Ascending aorta (tissue), 2 donors: ENCODE measurements at regions of chr4 and their contacts with region 1.

Region 1: DNA sequence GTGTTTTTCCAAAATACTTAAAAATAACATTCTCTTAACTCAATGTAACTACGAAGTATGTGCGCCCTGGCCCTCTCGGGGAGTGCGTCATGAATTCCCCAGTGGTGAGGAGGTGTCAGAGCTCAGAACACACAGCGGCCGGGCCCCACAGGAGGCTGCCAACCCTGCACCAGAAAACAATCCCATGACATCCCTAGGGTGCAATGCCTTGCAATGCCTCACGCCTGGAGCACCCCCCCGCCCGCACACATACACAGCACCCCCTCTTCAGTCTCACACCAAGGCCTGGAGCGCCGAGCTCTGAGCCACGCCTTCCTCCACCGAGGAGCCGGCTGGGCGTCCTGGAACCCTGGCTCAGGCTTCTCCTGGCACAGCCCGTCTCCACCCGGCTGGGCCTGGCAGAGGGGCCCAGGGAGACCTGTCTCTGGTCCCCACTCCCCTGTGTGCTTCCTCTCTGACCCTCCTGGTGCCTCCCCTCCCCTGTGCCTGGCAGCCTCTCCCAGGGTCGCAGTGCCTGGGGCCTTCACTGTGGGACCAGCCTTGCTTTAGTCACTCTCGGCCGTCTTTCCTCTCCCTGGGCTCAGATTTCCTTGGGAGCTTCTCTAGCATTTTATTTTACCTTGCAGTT is 108.2 kb upstream of the ADRA2C start:
- DNase-seq: peak; percentile 75 to 96
- H3K4me3 ChIP-seq: peak overlapping the region in 1 of 2 donors; percentile 44
- H3K27ac ChIP-seq: peak overlapping the region; percentile 92 to 97
- H3K4me1 ChIP-seq: peaks cover 6 to 22% of the 10 kb centered on the region in 2 donors
- H3K27me3 ChIP-seq: no peaks in the 10 kb centered on the region
- CTCF ChIP-seq: no peak

Region 2: DNA sequence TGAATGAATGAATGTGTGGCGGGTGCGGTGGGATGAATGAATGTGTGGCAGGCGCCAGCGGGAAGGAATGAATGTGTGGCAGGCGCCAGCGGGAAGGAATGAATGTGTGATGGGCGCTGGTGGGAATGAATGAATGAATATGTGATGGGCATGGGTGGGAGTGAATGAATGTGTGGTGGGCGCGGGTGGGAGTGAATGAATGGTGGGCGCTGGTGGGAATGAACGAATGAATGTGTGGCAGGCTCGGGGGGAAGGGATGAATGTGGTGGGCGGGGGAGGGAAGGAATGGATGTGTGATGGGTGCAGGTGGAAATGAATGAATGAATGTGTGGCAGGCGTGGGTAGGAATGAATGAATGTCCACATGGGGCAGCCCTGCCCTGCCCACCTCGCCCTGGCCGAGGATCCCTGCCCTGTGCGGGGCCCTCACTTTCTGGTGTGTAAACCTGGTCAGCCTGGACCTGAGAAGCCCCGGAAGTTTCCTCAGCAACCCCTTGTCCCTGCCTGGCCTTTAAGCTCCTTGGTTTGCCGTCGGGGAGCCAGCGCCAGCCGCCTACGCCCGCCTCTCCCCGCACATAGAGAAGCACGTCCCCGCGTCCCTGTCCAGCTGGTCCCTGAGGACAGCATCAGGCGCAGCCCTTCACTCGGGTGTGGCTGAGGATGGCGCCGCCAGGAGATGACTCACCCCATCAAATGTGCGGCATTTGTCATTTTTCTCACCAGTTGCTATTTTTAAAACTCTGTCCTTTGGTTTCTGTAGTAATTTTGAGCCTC is 13.0 kb before region 1 on chr4:
- intact Hi-C with region 1: loop called (anchors 1 kb)
- DNase-seq: peak in 1 of 2 donors; percentile 74
- H3K4me3 ChIP-seq: no peak overlapping the region
- H3K27ac ChIP-seq: no peak overlapping the region
- H3K4me1 ChIP-seq: peaks cover 0 to 10% of the 10 kb centered on the region in 2 donors
- H3K27me3 ChIP-seq: no peaks in the 10 kb centered on the region
- CTCF ChIP-seq: no peak

Region 3: GRCh38 chr4:3677748-3678070 is 19.7 kb after region 1 on chr4:
- intact Hi-C with region 1: no loop called
- DNase-seq: no peak
- H3K4me3 ChIP-seq: no peak overlapping the region
- H3K27ac ChIP-seq: no peak overlapping the region
- H3K4me1 ChIP-seq: no peaks in the 10 kb centered on the region
- H3K27me3 ChIP-seq: no peaks in the 10 kb centered on the region
- CTCF ChIP-seq: no peak

Region 4: DNA sequence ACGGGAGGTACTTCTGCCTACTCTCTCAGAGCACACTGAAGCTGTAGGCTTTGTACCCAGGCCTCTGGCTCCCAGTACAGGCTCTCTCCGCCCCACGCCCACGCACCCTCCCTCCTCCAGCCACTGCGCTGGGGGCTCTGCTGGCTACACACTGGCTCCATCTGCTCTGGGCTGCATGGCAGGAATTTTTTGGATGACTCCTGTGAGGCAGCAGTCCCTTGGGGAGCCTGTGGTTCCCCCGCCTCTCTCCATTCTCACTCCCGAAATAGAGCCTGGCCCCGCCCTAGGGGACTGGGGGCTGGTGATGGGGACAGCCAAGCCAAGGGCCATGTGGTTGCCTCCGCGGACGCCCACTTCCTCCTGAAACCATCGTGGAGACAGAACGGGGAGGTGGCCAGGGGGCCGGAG is 50.1 kb after region 1 on chr4:
- intact Hi-C with region 1: loop called (anchors 1 kb)
- DNase-seq: peak; percentile 61 to 94
- H3K4me3 ChIP-seq: peak overlapping the region; percentile 32 to 38
- H3K27ac ChIP-seq: peak overlapping the region; percentile 68 to 73
- H3K4me1 ChIP-seq: peaks cover 7 to 41% of the 10 kb centered on the region in 2 donors
- H3K27me3 ChIP-seq: no peaks in the 10 kb centered on the region
- CTCF ChIP-seq: no peak

Region 5: DNA sequence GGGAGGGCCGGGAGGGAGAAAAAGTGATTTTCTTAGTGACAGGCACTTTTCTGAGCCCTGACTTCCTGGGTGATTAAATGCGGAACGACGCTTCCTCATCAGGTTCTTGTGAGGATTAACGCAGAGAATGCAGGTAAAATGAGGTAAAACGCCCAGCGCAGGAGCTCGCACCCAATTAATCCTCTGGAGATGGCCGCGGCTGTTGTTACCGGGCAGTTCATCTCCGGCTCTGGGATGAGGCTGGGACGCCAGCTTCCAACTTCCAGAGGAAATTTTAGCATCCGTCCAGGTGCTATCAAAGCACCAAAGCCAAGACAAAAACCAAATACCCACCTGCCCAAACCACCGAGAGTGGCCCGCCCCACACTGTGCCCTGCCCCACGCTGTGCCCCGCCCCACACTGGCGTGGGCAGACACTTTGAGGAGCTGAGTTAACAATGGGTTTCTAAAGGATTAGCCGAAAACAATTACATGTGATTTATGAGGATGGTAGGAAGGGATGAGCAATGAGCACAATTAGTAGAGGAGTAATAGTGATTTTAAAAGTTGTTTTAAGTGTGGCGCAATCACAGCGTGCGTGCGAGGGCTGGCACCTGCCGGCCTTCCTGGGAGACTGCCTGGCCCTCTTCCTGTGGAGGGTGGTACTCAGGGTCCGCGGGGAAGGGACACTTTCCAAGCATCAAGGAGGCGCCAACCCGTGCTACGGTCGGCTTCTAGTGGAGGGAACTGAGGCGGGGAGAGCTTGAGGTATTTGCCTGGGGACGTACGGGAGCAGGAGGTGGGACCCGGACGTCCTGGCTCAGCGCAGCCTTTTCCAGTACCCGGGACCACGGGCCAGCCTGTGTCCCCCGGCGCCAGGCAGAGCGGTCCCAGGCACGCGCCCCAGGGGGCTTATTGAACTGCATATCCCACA is 66.6 kb after region 1 on chr4:
- intact Hi-C with region 1: loop called (anchors 5 kb)
- DNase-seq: no peak
- H3K4me3 ChIP-seq: peak overlapping the region in 1 of 2 donors; percentile 26
- H3K27ac ChIP-seq: peak overlapping the region; percentile 74 to 86
- H3K4me1 ChIP-seq: peaks cover 9 to 49% of the 10 kb centered on the region in 2 donors
- H3K27me3 ChIP-seq: no peaks in the 10 kb centered on the region
- CTCF ChIP-seq: no peak

Region 6: GRCh38 chr4:3747581-3747904 is 89.5 kb after region 1 on chr4:
- intact Hi-C with region 1: loop called (anchors 5 kb)
- DNase-seq: no peak
- H3K4me3 ChIP-seq: no peak overlapping the region
- H3K27ac ChIP-seq: peak overlapping the region; percentile 36 to 51
- H3K4me1 ChIP-seq: peaks cover 7 to 31% of the 10 kb centered on the region in 2 donors
- H3K27me3 ChIP-seq: no peaks in the 10 kb centered on the region
- CTCF ChIP-seq: peak in 2 of 3 experiments; percentile 37 to 50